GM12878 (cell line): ENCODE measurements at regions of chr14 and their contacts with region 1.

Region 1: DNA sequence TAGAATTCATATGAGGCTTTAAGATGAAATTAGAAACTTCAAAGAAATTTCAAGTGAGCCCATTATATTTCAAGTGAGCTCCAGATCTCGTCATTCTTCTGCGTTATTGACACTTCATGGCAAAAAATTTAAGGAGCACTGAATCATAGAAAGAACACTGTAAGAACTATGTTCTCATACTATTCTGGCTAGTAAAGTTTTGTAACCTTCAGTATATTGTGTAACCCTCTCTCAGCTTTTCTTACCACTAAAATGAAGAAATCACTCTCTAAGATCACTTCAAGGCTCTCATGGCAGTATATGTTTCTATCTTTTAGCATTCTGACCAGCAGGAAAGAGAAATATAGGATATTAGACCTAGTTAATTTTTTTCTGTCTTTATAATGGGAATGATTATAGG is 6.3 kb downstream of the GPHN start:
- DNase-seq: no peak
- ATAC-seq: no peak
- H3K4me3 ChIP-seq: no peak overlapping the region
- H3K27ac ChIP-seq: no peak overlapping the region
- H3K4me1 ChIP-seq: peaks cover 8% of the 10 kb centered on the region
- H3K27me3 ChIP-seq: no peaks in the 10 kb centered on the region
- CTCF ChIP-seq: no peak
- EP300 ChIP-seq: no peak
- POLR2A ChIP-seq: no peak
- RAD21 ChIP-seq: no peak

Region 2: GRCh38 chr14:66530526-66530925 is 16.3 kb after region 1 on chr14:
- CTCF ChIA-PET with region 1: interaction called, 13 read pairs
- POLR2A ChIA-PET with region 1: interaction called, 6 read pairs
- RAD21 ChIA-PET with region 1: interaction called, 3 read pairs
- SMC1A ChIA-PET with region 1: interaction called, 5 read pairs
- in situ Hi-C with region 1: no loop called
- intact Hi-C with region 1: no loop called
- DNase-seq: no peak
- ATAC-seq: peak; percentile 86
- H3K4me3 ChIP-seq: no peak overlapping the region
- H3K27ac ChIP-seq: no peak overlapping the region
- H3K4me1 ChIP-seq: peaks cover 2% of the 10 kb centered on the region; the same call in 1 of the 2 replicates
- H3K27me3 ChIP-seq: no peaks in the 10 kb centered on the region
- CTCF ChIP-seq: no peak
- EP300 ChIP-seq: no peak
- POLR2A ChIP-seq: no peak
- RAD21 ChIP-seq: no peak